ENCODE measurements at regions of chr14 and their contacts with region 1.

Region 1: DNA sequence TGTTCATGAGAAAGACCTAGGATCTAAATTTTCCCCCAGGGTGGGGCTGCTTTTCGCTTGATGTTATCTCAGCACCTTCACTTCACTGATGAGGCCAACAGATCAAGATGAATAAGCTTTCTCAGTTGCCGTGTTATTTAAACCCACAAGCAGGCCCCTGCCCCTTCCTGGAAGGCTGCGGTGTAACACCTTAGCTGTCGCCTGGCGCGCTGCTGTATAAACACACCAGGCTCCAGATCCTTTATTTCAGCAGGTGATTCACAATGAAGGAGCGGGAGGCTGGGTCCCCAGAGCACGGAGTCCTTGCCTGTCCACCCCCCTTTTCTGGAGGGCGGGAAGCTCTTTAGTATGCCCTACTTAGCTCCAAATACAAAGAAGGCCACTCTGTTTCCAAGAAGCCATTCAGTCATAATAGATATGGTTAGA is 515.4 kb downstream of the FUT8 start:
- DNase-seq: peak; percentile 81
- H3K4me3 Mint-ChIP-seq: peak overlapping the region; percentile 59
- H3K27ac Mint-ChIP-seq: peak overlapping the region; percentile 83
- H3K4me1 Mint-ChIP-seq: peaks cover 62% of the 10 kb centered on the region
- H3K27me3 Mint-ChIP-seq: no peaks in the 10 kb centered on the region

Region 2: DNA sequence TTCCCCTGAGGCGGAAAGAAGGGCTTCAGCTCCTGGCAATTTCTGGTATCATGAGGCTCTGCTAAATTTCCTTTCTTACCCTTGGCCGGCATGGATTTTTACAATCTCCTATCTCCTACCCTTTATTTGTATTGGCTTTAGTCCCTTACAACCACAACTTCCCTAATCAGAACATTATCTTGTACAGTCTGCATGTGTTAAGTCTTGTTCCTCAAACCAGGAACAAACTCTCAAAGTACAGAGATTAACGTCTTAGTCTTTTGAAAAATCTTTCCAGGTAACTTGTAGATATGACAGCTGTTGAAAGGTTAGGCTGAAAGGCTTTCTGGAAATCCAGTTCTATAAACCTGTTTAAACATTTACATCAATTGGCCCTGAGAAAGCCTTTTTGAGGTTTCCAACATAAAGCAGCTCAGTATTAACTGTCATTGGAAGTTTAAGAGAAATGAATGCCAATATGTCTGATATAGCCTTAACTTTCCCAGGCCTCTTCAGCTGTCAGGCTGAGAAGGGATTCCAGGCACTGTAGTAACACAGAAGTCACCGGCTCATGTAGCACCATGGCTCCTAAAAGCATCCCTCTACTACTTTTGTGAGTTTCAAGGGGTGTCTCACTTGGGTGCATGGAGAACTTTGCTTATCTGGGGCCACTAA is 154.9 kb before region 1 on chr14:
- intact Hi-C with region 1: no loop called
- DNase-seq: no peak
- H3K4me3 Mint-ChIP-seq: no peak overlapping the region
- H3K27ac Mint-ChIP-seq: no peak overlapping the region
- H3K4me1 Mint-ChIP-seq: no peaks in the 10 kb centered on the region
- H3K27me3 Mint-ChIP-seq: peaks cover 8% of the 10 kb centered on the region

Region 3: GRCh38 chr14:65847075-65847847 is 80.7 kb before region 1 on chr14:
- intact Hi-C with region 1: loop called (anchors 1 kb)
- DNase-seq: peak; percentile 79
- H3K4me3 Mint-ChIP-seq: peak overlapping the region; percentile 22
- H3K27ac Mint-ChIP-seq: peak overlapping the region; percentile 80
- H3K4me1 Mint-ChIP-seq: peaks cover 66% of the 10 kb centered on the region
- H3K27me3 Mint-ChIP-seq: no peaks in the 10 kb centered on the region

Region 4: GRCh38 chr14:65915125-65915524 is 12.8 kb before region 1 on chr14:
- intact Hi-C with region 1: loop called (anchors 1 kb)
- DNase-seq: no peak
- H3K4me3 Mint-ChIP-seq: no peak overlapping the region
- H3K27ac Mint-ChIP-seq: no peak overlapping the region
- H3K4me1 Mint-ChIP-seq: peaks cover 56% of the 10 kb centered on the region
- H3K27me3 Mint-ChIP-seq: peaks cover 7% of the 10 kb centered on the region

Region 5: GRCh38 chr14:65949711-65950516 is 22.0 kb after region 1 on chr14:
- intact Hi-C with region 1: loop called (anchors 2 kb)
- DNase-seq: no peak
- H3K4me3 Mint-ChIP-seq: no peak overlapping the region
- H3K27ac Mint-ChIP-seq: peak overlapping the region; percentile 65
- H3K4me1 Mint-ChIP-seq: peaks cover 42% of the 10 kb centered on the region
- H3K27me3 Mint-ChIP-seq: no peaks in the 10 kb centered on the region

Measured in activated T-helper 2 cell treated with anti-CD3 and anti-CD28 coated beads, Interferon-gamma antibody, Interleukin-2, Interleukin-4, amounts not matched to agents 10 μg/mL and 5 μg/mL and 100 μg/mL, durations not matched to agents 14 hours and 24 hours and 36 hours (primary cell).